Head of caudate nucleus (tissue), 42 donors: ENCODE measurements at regions of chr19 and their contacts with region 1.

Region 1: DNA sequence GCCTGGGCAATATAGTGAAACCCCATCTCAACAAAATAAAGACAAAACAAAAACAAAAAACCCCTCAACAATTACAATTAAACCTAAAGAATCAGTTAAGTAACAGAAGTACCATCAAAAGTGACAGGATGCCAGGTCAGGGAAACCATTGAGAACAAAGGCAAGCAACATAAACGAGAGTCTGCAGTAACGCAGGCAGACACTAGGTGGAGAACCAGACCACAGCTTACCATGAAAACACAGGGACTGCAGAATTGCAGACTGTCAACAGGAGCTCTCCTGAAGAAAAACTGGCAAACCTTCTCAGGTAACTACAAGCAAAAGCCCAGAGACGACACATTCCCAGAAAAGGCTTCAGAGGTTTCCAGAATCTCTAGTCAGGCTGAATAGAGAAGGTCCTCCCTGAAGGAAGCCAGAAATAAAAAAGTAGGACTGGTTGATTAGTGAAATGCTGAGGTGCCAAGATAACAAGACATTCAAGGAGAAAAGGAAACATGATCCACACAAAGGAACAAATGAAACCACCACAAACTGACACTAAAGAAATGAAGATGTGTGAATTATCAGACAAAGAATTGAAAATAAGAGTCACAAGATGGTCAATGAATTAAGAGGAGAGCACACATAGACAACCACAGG is 2.2 kb upstream of the ZNF665 start:
- DNase-seq: peak; percentile 36 to 93 (median 82)

Region 2: GRCh38 chr19:53158119-53158656 is 37.2 kb before region 1 on chr19:
- intact Hi-C with region 1: no loop called
- DNase-seq: peak in 37 of 42 donors; percentile 4 to 57 (median 23)

Region 3: DNA sequence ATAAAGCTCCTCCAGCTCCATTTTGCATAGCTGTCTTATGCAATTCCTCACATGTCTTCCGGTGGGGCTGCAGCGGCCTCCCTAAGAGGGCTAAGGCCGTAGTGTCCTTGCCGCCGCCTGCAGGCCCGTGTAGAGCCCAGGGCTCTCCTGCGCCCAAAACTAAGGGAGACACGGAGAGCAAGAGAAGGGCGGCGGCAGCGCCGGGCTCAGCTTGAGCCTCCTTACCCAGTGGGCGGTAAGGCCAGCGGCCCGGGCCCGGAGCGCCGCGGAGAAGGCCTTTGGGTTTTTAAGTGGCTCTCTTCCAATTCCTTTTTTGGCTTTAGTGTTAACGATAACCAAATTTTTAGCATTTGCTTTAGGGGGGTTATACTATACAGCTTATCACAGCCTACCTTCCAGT is 29.2 kb after region 1 on chr19:
- intact Hi-C with region 1: no loop called
- DNase-seq: no peak

Region 4: DNA sequence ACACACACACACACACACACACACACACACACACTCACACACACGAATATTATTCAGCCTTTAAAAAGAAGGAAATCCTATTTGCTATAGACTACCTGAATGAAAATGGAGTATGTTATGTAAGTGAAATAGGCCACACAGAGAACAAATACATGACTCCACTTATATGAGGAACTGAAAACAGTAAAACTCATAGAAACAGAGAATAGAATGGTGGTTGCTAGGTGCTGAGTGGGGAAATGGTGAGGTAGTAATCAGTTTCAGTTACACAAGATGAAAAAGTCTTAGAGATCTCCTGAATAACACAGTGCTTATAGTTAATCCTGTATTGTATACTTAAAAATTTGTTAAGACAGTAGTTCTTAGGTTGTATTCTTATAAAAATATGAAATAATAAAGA is 51.1 kb after region 1 on chr19:
- intact Hi-C with region 1: no loop called
- DNase-seq: no peak

Region 5: DNA sequence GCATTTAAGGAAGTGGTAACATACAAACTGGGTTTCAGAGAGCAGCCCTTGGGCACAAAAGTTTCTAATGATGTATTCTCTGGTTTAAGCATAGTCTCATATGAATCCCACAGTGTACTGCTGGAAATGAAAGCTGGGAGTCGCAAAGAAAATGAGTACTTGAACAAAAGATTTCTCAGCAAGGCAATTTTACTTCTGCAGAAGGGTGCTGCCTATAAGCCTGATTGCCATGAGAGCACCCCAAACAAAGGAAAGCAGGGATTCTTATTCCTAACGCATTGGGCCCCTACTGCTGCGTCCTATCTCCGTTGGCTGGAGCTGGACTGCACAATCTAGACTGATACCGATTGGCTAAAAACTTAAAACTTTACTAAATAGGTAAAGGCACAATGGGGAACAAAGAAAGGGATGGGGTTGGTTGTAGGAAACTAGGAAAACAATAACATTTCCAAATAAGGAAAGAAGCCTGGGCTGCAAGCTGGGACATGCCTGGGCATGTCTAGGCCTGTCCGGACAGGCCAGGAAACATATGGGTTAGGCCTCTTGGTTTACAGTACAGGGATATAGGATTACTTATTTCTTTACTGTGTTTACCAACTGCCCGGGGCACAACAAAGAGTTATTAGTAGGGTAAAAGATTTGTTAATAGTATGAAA is 99.5 kb after region 1 on chr19:
- intact Hi-C with region 1: no loop called
- DNase-seq: no peak

Region 6: DNA sequence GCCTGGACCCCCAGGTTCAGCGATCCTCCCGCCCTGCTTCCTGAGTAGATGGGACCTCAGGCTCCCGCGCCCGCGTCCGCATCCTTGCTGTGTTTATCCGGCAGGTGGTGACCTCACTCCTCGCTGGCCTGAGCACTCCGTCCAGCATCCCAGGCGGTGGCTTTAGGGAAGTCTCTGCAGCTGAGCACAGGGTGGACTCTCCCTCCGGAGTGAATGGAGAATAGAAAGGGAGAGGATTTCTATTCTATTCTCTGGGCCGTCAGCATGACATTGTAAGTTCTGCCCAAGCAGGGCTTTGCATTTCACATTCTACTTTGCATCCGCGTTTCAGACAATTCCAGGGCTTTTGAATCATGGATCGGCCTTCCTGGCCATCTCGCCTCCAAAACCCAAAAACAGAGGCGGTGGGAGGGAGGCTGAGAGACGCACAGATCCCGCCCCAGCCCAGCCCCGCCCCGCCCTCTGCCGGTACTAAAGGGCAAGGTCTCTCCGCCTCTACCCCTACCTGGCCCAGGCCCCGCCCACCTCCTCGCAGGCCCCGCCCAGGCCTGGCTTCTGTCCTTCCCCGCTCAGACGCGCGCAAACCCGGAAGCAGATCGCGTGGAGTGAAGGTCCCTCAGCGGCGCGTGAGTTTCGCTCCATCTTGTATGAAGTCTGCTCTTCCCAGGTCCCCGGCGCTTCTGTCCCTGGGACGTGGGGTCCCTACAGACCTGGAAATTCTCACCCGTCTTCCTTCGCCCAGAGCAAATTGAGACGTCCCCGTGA is 169.9 kb after region 1 on chr19 and contains the start of gene ZNF525:
- intact Hi-C with region 1: loop called (anchors 5 kb)
- DNase-seq: peak; percentile 79 to 96 (median 92)